BJ (cell line): ENCODE measurements at regions of chr5 and their contacts with region 1.

Region 1: DNA sequence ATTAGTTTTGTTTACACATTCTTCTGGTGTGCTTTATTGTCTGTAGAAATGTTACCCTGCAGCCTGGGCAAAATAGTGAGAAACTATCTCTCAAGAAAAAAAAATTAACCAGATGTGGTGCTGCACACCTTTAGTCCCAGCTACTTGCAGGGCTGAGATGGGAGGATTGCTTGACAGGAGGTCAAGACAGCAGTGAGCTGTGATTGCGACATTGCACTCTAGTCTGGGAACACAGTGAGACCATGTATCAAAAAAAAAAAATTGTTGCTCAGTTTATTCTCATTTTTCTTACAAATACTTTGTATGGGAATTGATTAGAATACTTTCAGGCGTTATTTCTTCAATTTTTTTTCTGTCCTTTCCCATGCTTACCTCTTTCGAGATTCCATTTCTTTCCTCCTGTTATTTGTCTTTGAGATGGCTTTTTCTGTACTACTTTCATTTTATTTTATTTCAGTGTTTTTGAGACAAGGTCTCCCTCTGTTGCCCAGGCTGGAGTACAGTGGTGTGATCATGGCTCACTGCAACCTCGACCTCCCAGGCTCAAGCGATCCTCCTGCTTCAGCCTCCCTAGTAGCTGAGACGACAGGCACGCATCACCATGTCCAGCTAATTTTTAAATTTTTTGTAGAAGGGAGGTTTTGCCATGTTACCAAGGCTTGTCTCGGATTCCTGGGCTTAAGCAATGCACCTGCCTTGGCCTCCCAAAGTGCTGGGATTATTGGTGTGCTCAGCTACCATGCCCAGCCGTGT is 24.9 kb downstream of the TENT2 start:
- DNase-seq: no peak
- H3K4me3 ChIP-seq: no peak overlapping the region
- H3K27me3 ChIP-seq: no peaks in the 10 kb centered on the region
- CTCF ChIP-seq: no peak

Region 2: DNA sequence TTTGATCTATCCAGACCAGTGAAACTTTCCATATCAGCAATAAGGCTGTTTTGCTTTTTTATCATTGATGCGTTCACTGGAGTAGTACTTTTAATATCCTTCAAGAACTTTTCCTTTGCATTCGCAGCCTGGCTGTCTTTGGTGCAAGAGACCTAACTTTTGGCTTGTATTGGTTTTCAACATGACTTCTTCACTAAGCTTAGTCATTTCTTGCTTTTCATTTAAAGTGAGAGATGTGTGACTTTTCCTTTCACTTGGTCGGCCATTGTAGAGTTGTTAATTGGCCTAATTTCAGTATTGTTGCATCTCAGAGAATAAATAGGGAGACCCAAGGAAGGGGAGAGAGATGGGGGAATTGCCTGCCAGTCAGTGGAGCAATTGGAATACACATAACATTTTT is 26.1 kb after region 1 on chr5:
- CTCF ChIA-PET with region 1: no interaction called
- POLR2A ChIA-PET with region 1: interaction called, 10 read pairs
- DNase-seq: no peak
- H3K4me3 ChIP-seq: no peak overlapping the region
- H3K27me3 ChIP-seq: no peaks in the 10 kb centered on the region
- CTCF ChIP-seq: no peak

Region 3: DNA sequence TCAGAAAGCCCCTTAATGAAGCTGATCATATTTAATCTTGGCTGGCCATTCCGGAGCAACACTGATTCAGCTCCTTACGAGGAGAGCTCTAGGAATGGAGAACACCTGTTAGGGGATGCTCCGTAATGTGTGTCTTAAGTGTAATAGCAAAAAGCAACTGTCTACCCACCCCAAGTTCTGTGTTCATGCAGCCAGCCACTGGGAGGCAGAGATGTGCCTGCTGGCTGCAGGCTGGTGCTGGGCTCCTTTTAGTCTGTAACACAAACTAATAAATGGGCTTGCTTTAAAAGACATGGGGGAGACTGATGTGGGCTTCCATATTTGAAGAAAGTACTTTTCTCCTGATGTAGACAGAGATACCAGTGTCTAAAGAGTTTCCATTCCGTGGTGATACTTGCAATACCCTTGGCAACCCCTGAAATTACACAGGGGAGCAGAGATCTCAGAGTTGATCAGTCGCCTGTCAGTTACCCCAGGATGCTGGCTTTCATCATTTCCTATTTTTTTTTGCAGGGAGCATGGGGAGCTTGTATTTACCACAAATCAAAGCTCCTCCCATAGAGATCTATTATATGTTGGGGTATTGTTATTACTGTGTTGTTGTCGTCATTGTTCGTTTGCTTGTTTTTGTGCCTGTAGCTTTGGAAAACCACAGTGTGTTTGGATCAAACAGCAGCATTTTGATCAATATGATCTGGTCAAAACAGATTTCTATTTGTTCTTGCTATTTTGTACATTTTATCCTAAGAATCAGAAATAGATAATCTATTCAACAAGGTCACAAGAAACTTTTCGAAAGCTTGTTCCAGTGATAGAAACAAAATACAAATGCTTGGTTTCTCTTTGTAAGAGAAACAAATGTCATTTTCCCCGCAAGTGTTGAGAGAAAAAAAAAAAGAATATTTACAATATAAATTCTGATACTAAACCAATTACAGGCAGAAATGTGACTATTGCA is 288.1 kb after region 1 on chr5:
- CTCF ChIA-PET with region 1: no interaction called
- POLR2A ChIA-PET with region 1: no interaction called
- DNase-seq: no peak
- H3K4me3 ChIP-seq: no peak overlapping the region
- H3K27me3 ChIP-seq: 0 out of 2 replicates have a peak, but pooled peaks cover 2% of the 10 kb centered on the region
- CTCF ChIP-seq: no peak

Region 4: DNA sequence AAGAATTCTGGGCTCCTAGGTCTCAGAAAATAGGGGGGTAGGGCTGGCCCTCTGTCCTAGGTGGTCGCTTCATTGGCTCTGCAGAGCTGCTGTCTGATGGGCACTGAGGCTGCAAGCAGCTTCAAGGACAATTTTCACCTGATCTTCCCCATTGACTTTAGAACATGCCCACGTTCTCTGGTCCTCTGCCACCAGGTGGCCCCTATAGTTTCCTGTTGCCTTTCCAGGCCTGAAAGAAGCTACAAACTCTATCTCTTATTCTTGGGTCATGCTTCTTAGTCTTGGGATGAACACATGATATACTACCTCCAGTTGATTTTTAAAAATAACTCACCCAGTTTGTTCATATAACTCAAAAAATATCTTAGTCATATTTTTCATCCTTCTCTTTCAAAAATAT is 708.9 kb after region 1 on chr5:
- CTCF ChIA-PET with region 1: no interaction called
- POLR2A ChIA-PET with region 1: no interaction called
- DNase-seq: no peak
- H3K4me3 ChIP-seq: no peak overlapping the region
- H3K27me3 ChIP-seq: no peaks in the 10 kb centered on the region
- CTCF ChIP-seq: peak; percentile 34